ENCODE measurements at regions of chr6 and their contacts with region 1.

Region 1: DNA sequence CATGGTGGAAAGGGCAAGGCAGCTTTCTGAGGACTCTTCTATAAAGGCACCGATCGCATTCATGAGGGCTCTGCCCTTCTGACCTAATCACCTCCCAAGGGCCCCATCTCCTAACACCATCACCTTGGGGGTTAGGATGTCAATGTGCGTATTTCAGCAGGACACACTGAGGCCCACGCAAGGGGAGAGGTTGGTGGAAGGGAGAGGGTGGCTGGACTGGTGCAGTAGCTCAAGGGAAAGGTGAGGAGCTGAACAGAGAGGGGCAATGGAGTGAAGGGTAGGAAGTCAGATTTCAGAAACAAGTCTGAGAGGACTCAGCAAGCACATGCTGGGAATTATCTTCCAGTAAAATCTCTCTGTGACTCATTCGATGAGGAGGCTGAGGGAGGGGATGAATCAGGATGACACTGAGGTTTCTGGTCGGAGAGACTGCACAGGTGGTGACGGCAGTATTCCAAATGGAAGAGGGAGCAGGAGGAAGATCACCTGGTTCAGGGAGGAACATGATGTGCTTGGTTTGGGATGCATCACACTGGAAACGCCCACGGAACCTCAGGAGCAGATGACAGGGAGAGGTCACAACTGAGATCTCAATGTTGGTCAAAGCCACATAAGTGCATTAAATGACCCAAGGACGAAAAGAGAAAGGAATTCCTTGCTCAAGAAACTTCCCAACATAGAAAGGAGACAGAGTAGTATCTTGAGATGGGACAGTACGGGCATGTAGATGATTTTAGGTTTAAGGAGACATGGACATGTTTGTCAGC is 67.1 kb downstream of the TFAP2A start:
- DNase-seq: no peak
- H3K4me3 ChIP-seq: no peak overlapping the region
- H3K4me3 Mint-ChIP-seq: no peak overlapping the region
- H3K27ac ChIP-seq: no peak overlapping the region
- H3K27ac Mint-ChIP-seq: no peak overlapping the region
- H3K4me1 ChIP-seq: no peaks in the 10 kb centered on the region
- H3K4me1 Mint-ChIP-seq: no peaks in the 10 kb centered on the region
- H3K27me3 ChIP-seq: no peaks in the 10 kb centered on the region
- H3K27me3 Mint-ChIP-seq: peaks cover 2 to 18% (median 3%) of the 10 kb centered on the region in 3 donors
- CTCF ChIP-seq: no peak

Region 2: DNA sequence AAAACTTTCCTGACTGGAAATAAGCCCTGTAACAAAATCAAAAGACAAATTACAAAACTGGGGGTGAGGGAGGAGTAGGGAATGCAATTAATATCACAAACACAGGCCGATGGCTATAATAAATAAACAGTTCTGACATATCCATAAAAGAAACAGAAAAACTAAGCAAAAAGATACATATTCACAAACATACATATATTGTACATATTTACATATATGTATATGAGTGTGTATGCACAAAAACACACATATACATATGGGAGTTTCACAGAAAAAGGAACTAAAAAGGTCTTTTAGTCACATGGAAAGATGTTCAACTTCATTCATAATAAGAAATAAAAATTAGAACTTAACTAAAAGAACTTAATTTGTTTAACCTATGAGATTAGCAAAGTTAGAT is 225.6 kb before region 1 on chr6:
- intact Hi-C with region 1: no loop called
- DNase-seq: no peak
- H3K4me3 ChIP-seq: no peak overlapping the region
- H3K4me3 Mint-ChIP-seq: no peak overlapping the region
- H3K27ac ChIP-seq: no peak overlapping the region
- H3K27ac Mint-ChIP-seq: no peak overlapping the region
- H3K4me1 ChIP-seq: no peaks in the 10 kb centered on the region
- H3K4me1 Mint-ChIP-seq: no peaks in the 10 kb centered on the region
- H3K27me3 ChIP-seq: no peaks in the 10 kb centered on the region
- H3K27me3 Mint-ChIP-seq: peaks cover 0 to 15% (median 2%) of the 10 kb centered on the region in 3 donors
- CTCF ChIP-seq: no peak

Region 3: DNA sequence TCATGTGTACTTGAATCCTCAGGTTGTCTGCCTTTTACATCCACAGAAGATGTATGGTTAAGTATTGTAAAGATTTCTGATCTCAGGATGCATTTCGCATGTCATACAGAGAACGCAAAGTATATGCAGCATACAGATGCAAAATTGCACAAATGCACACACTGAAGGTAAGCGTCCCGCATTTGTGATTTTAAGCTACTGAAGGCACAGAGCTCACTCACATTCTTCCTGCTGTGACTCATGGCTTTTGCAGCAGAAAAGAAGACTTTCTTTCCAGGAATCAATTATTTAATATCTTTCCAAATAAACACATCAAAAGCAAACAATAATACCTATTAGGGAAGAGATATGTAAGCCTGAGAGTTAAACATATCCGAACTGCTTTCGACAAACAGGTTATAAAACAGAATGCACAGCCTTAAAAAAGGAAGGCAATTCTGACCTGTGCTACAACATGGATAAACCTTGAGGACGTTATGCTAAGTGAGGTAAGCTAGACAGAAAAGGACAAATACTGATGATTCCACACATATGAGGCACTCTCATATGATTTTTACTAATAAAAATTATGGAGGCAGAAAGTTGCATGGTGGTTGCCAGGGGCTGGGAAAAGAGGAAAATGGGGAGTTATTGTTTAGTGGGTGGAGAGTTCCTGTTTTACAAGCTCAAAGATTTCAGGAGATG is 41.9 kb before region 1 on chr6:
- intact Hi-C with region 1: loop called in 1 of 2 experiments (anchors 2 kb)
- DNase-seq: no peak
- H3K4me3 ChIP-seq: no peak overlapping the region
- H3K4me3 Mint-ChIP-seq: no peak overlapping the region
- H3K27ac ChIP-seq: no peak overlapping the region
- H3K27ac Mint-ChIP-seq: no peak overlapping the region
- H3K4me1 ChIP-seq: no peaks in the 10 kb centered on the region
- H3K4me1 Mint-ChIP-seq: no peaks in the 10 kb centered on the region
- H3K27me3 ChIP-seq: no peaks in the 10 kb centered on the region
- H3K27me3 Mint-ChIP-seq: peaks cover 4 to 5% (median 4%) of the 10 kb centered on the region in 3 donors
- CTCF ChIP-seq: no peak

Region 4: DNA sequence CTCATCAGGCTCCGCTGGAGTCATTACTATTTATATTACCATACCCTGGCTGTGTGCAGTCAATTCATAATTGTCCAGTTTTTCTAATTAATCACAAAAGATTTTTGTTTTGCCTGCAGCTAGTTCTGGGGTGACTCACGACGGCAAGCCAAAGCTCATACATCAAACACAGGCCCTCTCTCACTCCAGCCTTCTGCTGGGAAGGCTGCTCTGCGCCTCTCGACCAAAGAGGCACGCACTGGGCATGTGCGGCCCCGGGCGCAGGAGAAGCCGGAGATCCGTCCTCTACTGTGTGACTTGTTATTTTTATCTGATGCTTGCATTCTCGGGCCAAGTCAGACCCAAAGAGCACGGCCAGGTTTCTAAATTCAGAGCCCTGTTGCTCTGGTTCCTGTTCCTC is 31.4 kb before region 1 on chr6:
- intact Hi-C with region 1: no loop called
- DNase-seq: no peak
- H3K4me3 ChIP-seq: no peak overlapping the region
- H3K4me3 Mint-ChIP-seq: no peak overlapping the region
- H3K27ac ChIP-seq: no peak overlapping the region
- H3K27ac Mint-ChIP-seq: no peak overlapping the region
- H3K4me1 ChIP-seq: no peaks in the 10 kb centered on the region
- H3K4me1 Mint-ChIP-seq: no peaks in the 10 kb centered on the region
- H3K27me3 ChIP-seq: no peaks in the 10 kb centered on the region
- H3K27me3 Mint-ChIP-seq: peaks cover 0 to 14% (median 5%) of the 10 kb centered on the region in 3 donors
- CTCF ChIP-seq: no peak

Region 5: DNA sequence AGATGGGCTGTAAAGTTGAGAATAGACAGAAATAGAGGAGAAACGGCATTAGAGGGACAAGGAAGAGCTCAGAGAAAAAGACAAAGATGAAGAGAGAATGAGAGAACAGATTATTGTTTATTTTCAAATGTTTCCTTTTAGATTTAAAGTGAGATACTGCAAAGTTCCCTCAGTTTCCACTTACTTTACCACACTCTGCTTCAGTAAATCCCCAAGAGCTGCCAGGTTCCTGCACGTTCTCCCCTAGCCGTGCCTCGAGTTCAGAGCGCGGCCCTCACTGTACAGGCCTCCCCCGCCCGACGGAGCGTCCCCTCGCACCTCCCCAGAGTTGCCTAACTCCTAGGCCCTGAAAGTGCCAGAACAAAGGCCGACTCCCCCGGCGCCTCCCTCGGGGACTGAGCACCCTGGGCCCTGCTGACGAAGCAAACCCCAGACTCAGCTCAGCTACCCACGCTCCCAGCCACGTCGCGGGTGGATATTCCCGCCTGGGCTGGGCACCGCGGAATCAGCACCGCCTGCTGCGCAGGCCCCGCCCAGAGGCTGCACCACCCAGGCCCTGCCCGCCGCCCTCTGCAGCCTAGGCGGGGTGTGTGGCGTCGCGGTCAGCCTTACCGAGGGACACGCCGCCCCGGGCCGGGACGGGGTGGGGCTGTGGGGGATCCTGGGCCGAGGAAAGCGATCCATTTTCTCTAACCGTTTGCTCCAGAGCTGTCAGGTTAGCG is 35.5 kb after region 1 on chr6:
- intact Hi-C with region 1: no loop called
- DNase-seq: no peak
- H3K4me3 ChIP-seq: peak overlapping the region in 1 of 3 experiments; percentile 14
- H3K4me3 Mint-ChIP-seq: peak overlapping the region in 1 of 2 donors; percentile 71
- H3K27ac ChIP-seq: no peak overlapping the region
- H3K27ac Mint-ChIP-seq: no peak overlapping the region
- H3K4me1 ChIP-seq: no peaks in the 10 kb centered on the region
- H3K4me1 Mint-ChIP-seq: peaks cover 14% of the 10 kb centered on the region
- H3K27me3 ChIP-seq: peaks cover 79 to 94% of the 10 kb centered on the region in 2 donors
- H3K27me3 Mint-ChIP-seq: peaks cover 85 to 91% (median 88%) of the 10 kb centered on the region in 3 donors
- CTCF ChIP-seq: no peak

Region 6: DNA sequence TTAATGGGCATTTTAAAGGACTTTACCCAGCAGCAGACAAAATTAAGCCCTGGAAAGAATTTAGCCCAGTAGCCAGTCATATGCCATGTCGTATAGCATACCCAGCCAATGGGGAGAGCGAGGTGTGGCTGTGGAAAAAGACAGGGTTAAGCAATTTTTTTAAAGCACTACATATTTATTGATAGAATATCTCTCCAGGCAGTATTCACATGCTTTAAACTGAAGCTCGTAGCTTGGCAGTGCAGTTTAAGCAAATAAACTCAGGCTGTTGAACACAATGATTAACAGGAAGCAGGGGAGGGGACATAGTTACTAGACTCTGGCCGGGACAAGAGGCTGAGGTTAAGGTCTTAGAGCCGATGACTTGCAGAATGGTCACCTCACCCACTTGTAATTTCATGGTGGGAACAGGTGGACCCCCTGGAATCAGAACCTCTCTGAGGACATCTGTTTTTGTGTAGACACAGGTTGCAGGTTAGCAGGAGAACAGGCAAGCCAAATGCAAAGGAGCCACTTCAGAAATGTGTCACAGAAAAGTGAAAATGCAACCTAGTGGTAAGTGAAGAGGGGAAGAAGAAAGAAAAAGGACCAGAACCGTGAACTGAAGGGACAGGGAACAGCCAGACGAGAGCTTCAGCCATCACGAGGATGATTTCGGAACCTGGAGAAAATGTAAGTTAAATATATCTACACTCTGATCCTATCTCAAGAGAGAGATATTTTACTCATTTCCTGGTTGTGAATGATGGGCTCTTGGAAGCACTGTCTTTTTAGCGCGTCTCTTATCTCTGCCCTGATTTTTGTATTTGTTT is 180.6 kb after region 1 on chr6:
- intact Hi-C with region 1: no loop called
- DNase-seq: peak; percentile 32 to 56 (median 52)
- H3K4me3 ChIP-seq: peak overlapping the region; percentile 58 to 99 (median 87)
- H3K4me3 Mint-ChIP-seq: peak overlapping the region; percentile 93
- H3K27ac ChIP-seq: peak overlapping the region; percentile 80 to 86
- H3K27ac Mint-ChIP-seq: peak overlapping the region; percentile 89 to 99 (median 96)
- H3K4me1 ChIP-seq: peaks cover 51 to 63% of the 10 kb centered on the region in 2 donors
- H3K4me1 Mint-ChIP-seq: peaks cover 60% of the 10 kb centered on the region
- H3K27me3 ChIP-seq: no peaks in the 10 kb centered on the region
- H3K27me3 Mint-ChIP-seq: no peaks in the 10 kb centered on the region
- CTCF ChIP-seq: no peak